Gastrocnemius medialis (tissue), 4 donors: ENCODE measurements at regions of chr2 and their contacts with region 1.

Region 1: GRCh38 chr2:71130113-71130904 is at the starts of genes MCEE and MPHOSPH10:
- DNase-seq: peak; percentile 83 to 86
- ATAC-seq: peak; percentile 95 to 98
- H3K4me3 ChIP-seq: peak within 1 kb of the TSS; percentile 85 to 97 (median 90)
- H3K27ac ChIP-seq: peak within 1 kb of the TSS; percentile 89 to 95 (median 93)
- H3K4me1 ChIP-seq: peaks cover 37 to 39% of the 10 kb centered on the region in 2 donors
- H3K27me3 ChIP-seq: no peaks in the 10 kb centered on the region
- CTCF ChIP-seq: no peak
- POLR2A ChIP-seq: peak; percentile 51 to 56
- total RNA-seq, gene MCEE: 10.0 to 20.2 (median 13.1) TPM
- total RNA-seq, gene MPHOSPH10: 27.8 to 49.1 (median 32.8) TPM

Region 2: DNA sequence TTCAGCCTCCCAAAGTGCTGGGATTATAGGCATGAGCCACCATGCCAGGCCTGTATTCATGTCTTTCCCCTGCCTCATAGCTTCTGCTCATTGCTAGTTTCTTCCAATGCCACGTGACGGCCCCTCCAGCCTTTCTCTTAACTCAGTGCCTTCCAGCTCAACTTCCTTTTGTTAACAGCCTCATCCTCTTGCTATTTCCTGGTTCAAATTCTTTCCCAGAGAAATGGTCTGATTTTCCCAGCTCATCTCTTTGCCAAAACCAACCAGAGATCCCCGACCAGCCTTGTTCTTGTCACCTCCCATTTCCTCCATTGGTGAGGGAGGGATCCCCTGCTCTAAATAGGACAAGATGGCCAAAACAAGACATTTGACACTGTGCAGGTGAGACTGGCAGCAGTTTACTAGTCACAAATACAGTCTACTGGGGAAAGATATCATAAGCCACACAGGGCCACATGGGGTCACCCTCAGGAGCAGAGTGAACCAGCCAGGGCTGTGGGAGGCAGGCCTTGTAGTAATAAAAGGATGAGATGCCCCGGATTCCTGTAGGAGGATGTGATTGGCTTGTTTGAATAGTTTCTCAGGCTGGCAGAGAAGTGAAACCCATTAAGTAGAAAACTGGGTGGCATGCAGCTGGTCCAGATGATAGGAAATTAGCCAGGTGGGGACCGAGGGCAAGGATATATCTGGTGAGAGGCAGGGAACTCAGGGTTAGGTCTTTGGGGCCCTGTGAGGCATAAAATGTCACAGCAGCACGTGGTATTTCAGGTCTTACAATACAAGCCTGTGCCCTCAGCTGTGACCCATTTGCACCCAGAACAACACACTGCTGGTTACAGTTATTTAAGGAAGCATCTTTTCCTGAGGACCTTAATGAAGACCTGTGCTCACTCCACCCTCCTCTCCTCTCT is 301.1 kb before region 1 on chr2:
- in situ Hi-C with region 1: no loop called
- intact Hi-C with region 1: no loop called
- DNase-seq: no peak
- ATAC-seq: no peak
- H3K4me3 ChIP-seq: no peak overlapping the region
- H3K27ac ChIP-seq: no peak overlapping the region
- H3K4me1 ChIP-seq: no peaks in the 10 kb centered on the region
- H3K27me3 ChIP-seq: no peaks in the 10 kb centered on the region
- CTCF ChIP-seq: no peak
- POLR2A ChIP-seq: no peak

Region 3: DNA sequence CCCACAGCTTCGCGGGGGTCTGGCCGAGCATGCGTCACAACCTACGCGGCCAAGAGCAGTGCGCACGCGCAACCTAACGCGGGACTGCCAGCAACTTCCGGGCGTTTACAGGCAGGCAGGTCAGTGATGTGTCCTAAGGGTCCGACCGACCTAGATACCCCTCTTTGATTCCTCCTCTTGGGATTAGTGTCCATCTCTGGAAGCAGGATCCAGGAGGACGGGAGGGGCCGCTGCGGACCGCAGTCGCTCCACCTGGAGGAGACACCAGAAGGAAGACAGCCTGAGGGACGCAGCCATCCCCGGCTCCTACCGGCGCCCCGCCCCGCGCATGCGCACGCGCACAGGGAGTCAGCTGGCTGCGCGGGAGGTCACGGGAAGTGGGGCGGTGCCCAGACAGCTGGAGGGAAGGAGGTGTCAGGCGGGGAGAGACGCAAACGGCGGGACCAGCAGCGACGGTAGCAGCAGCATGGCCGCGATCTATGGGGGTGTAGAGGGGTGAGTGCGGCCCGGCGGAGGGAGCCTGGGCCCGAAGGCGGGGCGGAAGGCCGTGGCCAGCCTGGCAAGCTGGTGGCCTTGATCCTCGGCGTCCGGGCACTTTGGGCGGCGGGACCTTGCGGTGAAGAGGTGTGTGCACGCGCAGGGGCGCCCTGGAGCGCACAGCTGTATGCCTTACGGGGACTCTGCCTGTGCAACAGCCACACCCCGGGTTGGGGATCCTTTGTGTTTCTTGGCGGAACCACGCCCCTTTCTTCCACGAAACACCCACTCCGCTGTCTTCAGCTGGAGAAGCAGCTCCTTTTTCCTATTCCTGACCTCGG is 61.9 kb before region 1 on chr2 and contains the start of gene NAGK:
- in situ Hi-C with region 1: loop called in 1 of 4 experiments (anchors 5 kb)
- intact Hi-C with region 1: loop called (anchors 1 kb)
- DNase-seq: peak; percentile 92 to 95
- ATAC-seq: peak; percentile 94 to 95
- H3K4me3 ChIP-seq: peak within 1 kb of the TSS; percentile 76 to 93 (median 82)
- H3K27ac ChIP-seq: peak within 1 kb of the TSS; percentile 89 to 99 (median 94)
- H3K4me1 ChIP-seq: peaks cover 25 to 26% of the 10 kb centered on the region in 2 donors
- H3K27me3 ChIP-seq: no peaks in the 10 kb centered on the region
- CTCF ChIP-seq: peak in 1 of 5 experiments; percentile 38
- POLR2A ChIP-seq: peak; percentile 100
- total RNA-seq, gene NAGK: 24.2 to 43.5 (median 41.2) TPM

Region 4: DNA sequence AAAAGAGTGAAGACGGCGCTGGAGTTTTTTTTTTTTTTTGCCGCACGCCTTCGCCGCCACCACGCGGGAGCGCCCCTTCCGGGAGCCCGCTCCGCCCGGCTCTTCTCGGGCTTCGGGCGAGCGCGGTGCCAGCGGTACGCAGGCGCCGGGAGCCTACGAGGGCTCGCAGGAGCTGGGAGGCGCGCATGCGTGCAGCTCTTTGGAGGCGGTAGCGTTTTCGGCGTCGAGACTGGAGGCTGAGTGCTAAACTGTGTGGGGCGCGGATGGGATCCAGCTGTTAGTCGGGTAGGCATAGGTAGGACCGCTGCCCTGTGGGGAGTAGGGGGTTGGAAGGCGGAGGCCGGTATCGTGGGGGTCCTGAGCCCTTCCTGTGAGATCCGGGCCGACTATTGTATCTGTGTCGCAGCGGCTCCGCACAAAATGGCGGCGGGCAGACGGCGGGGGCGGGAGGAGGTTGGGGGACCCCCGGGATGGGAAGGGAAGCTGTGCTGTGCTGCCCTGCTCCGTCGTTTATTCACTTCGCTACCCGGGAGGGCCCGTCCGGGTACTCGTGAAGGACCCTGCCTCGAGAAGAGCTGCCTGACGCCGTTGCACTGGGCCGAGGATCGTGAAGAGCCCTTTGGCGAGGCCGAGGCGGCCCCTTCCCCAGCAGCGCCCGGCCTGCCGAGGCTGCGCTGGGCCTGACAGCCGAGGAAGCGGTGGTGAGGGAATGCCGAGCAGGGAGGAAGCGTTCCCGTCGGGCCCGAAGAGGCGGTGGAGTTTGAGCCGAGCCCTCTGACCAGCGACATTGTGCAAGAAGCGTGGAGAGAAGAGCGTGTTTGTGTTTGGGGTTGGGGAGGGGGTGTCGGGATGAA is 201.5 kb after region 1 on chr2 and contains the start of gene ZNF638:
- in situ Hi-C with region 1: no loop called
- intact Hi-C with region 1: loop called (anchors 5 kb)
- DNase-seq: peak; percentile 85 to 92
- ATAC-seq: peak; percentile 91 to 94
- H3K4me3 ChIP-seq: peak within 1 kb of the TSS; percentile 81 to 98 (median 85)
- H3K27ac ChIP-seq: peak within 1 kb of the TSS; percentile 94 to 97 (median 95)
- H3K4me1 ChIP-seq: peaks cover 37 to 42% of the 10 kb centered on the region in 2 donors
- H3K27me3 ChIP-seq: no peaks in the 10 kb centered on the region
- CTCF ChIP-seq: peak; percentile 69 to 87 (median 85)
- POLR2A ChIP-seq: peak; percentile 87 to 95
- total RNA-seq, gene ZNF638: 69.7 to 152 (median 95.0) TPM